Pancreas (tissue), 10 donors: ENCODE measurements at regions of chr15 and their contacts with region 1.

Region 1: DNA sequence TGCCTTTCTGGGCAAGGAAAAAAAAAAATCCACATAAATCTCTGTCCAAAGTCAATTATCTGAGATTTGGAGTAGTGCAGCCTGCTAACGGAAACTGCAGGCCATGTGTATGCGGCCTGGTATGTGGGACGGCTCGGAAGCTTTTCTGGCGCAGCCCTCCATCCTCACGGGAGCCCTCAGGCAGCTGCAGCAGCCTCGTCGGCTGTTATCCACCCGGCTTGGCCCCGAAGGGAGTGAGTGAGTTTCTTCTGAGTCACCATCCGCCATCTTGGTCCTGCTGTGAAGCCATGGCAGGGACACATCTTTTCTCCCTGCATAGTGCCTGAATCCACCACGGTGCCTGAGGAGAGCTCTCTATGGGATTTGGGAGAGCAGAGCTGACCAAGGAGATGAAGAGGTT is 62.8 kb downstream of the POLR2M start:
- DNase-seq: peak in 1 of 6 donors; percentile 6
- ATAC-seq: peak in 3 of 4 donors; percentile 32 to 44 (median 42)
- H3K4me3 ChIP-seq: no peak overlapping the region
- H3K27ac ChIP-seq: no peak overlapping the region
- H3K4me1 ChIP-seq: no peaks in the 10 kb centered on the region
- H3K27me3 ChIP-seq: no peaks in the 10 kb centered on the region
- CTCF ChIP-seq: no peak

Region 2: GRCh38 chr15:57263520-57263919 is 505.7 kb before region 1 on chr15:
- intact Hi-C with region 1: no loop called
- DNase-seq: no peak
- ATAC-seq: no peak
- H3K4me3 ChIP-seq: no peak overlapping the region
- H3K27ac ChIP-seq: no peak overlapping the region
- H3K4me1 ChIP-seq: no peaks in the 10 kb centered on the region
- H3K27me3 ChIP-seq: no peaks in the 10 kb centered on the region
- CTCF ChIP-seq: no peak

Region 3: GRCh38 chr15:57859130-57859685 is 89.9 kb after region 1 on chr15:
- intact Hi-C with region 1: loop called in 1 of 3 experiments (anchors 10 kb)
- DNase-seq: no peak
- ATAC-seq: no peak
- H3K4me3 ChIP-seq: no peak overlapping the region
- H3K27ac ChIP-seq: no peak overlapping the region
- H3K4me1 ChIP-seq: no peaks in the 10 kb centered on the region
- H3K27me3 ChIP-seq: no peaks in the 10 kb centered on the region
- CTCF ChIP-seq: no peak

Region 4: DNA sequence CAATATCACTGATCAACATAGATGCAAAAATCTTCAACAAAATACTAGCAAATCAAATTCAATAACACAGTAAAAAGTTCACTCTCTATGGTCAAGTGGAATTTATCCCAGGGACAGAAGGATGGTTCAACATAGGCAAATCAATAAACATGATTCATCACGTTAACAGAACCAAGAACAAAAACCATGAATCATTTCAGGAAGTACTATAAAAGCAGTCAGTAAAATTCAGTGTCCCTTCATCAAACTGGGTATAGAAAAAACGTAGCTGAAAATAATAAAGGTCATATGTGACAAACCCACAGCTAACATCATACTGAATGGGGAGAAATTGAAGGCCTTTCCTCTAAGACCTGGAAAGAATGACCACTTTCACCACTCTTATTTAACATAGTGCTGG is 109.3 kb after region 1 on chr15:
- intact Hi-C with region 1: no loop called
- DNase-seq: no peak
- ATAC-seq: peak in 1 of 4 donors; percentile 29
- H3K4me3 ChIP-seq: no peak overlapping the region
- H3K27ac ChIP-seq: no peak overlapping the region
- H3K4me1 ChIP-seq: no peaks in the 10 kb centered on the region
- H3K27me3 ChIP-seq: no peaks in the 10 kb centered on the region
- CTCF ChIP-seq: no peak

Region 5: DNA sequence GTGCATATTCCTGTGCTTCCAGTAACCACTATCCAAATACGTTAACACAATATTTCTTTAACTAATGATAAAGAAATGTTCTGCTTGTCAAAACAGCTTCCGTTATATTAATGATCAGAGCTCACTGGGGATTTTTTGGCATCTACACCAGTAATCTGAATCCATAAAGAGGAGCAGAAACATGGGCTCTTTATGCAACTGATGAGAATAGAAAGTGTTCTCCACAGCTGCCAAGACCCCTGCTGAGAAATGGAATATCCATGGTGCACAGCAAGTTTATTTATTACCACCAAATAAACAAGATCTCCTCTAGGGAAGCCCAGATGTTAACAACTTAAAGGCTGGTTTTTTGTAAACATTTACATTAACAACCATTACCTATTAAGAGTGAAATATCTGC is 241.7 kb after region 1 on chr15:
- intact Hi-C with region 1: no loop called
- DNase-seq: no peak
- ATAC-seq: no peak
- H3K4me3 ChIP-seq: no peak overlapping the region
- H3K27ac ChIP-seq: no peak overlapping the region
- H3K4me1 ChIP-seq: no peaks in the 10 kb centered on the region
- H3K27me3 ChIP-seq: no peaks in the 10 kb centered on the region
- CTCF ChIP-seq: no peak

Region 6: GRCh38 chr15:58056015-58056414 is 286.7 kb after region 1 on chr15:
- intact Hi-C with region 1: no loop called
- DNase-seq: no peak
- ATAC-seq: no peak
- H3K4me3 ChIP-seq: no peak overlapping the region
- H3K27ac ChIP-seq: no peak overlapping the region
- H3K4me1 ChIP-seq: peaks cover 0 to 6% (median 3%) of the 10 kb centered on the region in 3 donors
- H3K27me3 ChIP-seq: peaks cover 0 to 7% (median 2%) of the 10 kb centered on the region in 4 donors
- CTCF ChIP-seq: no peak